ENCODE measurements at regions of chr12 and their contacts with region 1.

Region 1: DNA sequence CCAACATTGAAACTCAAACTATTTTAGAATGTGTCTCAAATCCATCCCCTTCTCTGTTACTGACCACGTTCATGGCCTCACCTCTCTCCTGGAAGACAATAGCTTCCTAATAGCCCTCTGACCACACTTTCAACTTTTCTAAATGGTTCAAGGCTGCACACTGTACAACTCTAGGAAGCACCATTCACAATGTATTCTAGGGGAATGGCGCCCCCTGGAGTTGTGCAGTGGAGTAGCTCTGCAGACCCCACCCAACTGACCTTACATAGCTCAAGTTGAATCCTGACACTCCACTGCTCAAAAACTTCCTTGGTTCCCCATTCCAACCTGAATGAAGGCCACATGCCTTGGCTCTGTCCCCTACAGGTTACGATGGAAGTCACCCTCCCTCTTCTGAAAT is 77.6 kb downstream of the GAS2L3 start:
- DNase-seq: no peak
- H3K4me3 ChIP-seq: no peak overlapping the region
- H3K27ac ChIP-seq: no peak overlapping the region
- H3K4me1 ChIP-seq: no peaks in the 10 kb centered on the region
- H3K27me3 ChIP-seq: no peaks in the 10 kb centered on the region
- CTCF ChIP-seq: peak in 2 of 3 experiments; percentile 25 to 51; a peak in 3 of 4 replicates
- EP300 ChIP-seq: no peak
- POLR2A ChIP-seq: no peak
- RAD21 ChIP-seq: peak in 1 of 2 experiments; percentile 10; a peak in 2 of 4 replicates

Region 2: GRCh38 chr12:100632445-100632892 is 18.6 kb before region 1 on chr12:
- CTCF ChIA-PET with region 1: interaction called, 10 read pairs
- POLR2A ChIA-PET with region 1: no interaction called
- DNase-seq: no peak
- H3K4me3 ChIP-seq: no peak overlapping the region
- H3K27ac ChIP-seq: no peak overlapping the region
- H3K4me1 ChIP-seq: peaks cover 0 to 2% (median 0%) of the 10 kb centered on the region in 4 experiments; a peak in 2 of 7 replicates
- H3K27me3 ChIP-seq: peaks cover 0 to 1% (median 0%) of the 10 kb centered on the region in 4 experiments; a peak in 1 of 7 replicates
- CTCF ChIP-seq: no peak
- EP300 ChIP-seq: no peak
- POLR2A ChIP-seq: no peak
- RAD21 ChIP-seq: no peak

Measured in H1 (cell line).